ENCODE measurements at regions of chr6 and their contacts with region 1.

Region 1: GRCh38 chr6:22737331-22737730 is 168.0 kb downstream of the HDGFL1 start:
- DNase-seq: peak; percentile 67
- ATAC-seq: peak; percentile 92
- H3K4me3 Mint-ChIP-seq: no peak overlapping the region
- H3K27ac Mint-ChIP-seq: peak overlapping the region; percentile 60; the same call in 1 of the 2 replicates
- H3K4me1 Mint-ChIP-seq: peaks cover 19% of the 10 kb centered on the region
- H3K27me3 Mint-ChIP-seq: no peaks in the 10 kb centered on the region; the same call in 1 of the 2 replicates
- CTCF ChIP-seq: peak; percentile 52

Region 2: DNA sequence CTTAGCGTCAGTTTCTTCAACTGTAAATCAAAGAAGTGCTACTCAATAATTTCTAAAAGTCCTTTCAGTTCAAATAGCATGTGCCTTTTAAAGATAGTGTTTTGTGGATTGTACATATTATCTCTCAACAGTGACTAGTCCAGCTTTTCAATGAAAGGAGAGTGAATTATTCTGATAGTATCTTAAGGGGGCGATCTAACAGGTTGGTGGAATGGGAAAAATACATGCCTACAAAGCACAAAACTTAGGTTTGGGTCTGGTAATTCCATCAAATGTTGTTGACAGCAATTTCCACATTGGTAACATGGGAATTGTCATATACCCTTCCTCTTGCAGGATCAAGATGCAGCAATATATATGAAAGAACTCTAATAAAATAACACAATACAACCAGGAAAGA is 218.1 kb before region 1 on chr6:
- CTCF ChIA-PET with region 1: interaction called, 12 read pairs
- POLR2A ChIA-PET with region 1: no interaction called
- DNase-seq: no peak
- ATAC-seq: no peak; the same call in 1 of the 2 replicates
- H3K4me3 Mint-ChIP-seq: no peak overlapping the region
- H3K27ac Mint-ChIP-seq: no peak overlapping the region
- H3K4me1 Mint-ChIP-seq: peaks cover 4% of the 10 kb centered on the region
- H3K27me3 Mint-ChIP-seq: no peaks in the 10 kb centered on the region
- CTCF ChIP-seq: no peak

Measured in WTC11 (cell line).